Left ventricle myocardium inferior (tissue), 1 donor: ENCODE measurements at regions of chr3 and their contacts with region 1.

Region 1: GRCh38 chr3:152183473-152183872 is 85.3 kb upstream of the MBNL1 start:
- DNase-seq: peak; percentile 39
- H3K4me3 ChIP-seq: no peak overlapping the region
- H3K27ac ChIP-seq: no peak overlapping the region
- H3K4me1 ChIP-seq: peaks cover 2% of the 10 kb centered on the region
- H3K27me3 ChIP-seq: no peaks in the 10 kb centered on the region
- CTCF ChIP-seq: peak; percentile 76

Region 2: GRCh38 chr3:152331018-152331541 is 147.6 kb after region 1 on chr3:
- intact Hi-C with region 1: no loop called
- DNase-seq: no peak
- H3K4me3 ChIP-seq: peak overlapping the region; percentile 5
- H3K27ac ChIP-seq: peak overlapping the region; percentile 83
- H3K4me1 ChIP-seq: peaks cover 92% of the 10 kb centered on the region
- H3K27me3 ChIP-seq: no peaks in the 10 kb centered on the region
- CTCF ChIP-seq: no peak

Region 3: DNA sequence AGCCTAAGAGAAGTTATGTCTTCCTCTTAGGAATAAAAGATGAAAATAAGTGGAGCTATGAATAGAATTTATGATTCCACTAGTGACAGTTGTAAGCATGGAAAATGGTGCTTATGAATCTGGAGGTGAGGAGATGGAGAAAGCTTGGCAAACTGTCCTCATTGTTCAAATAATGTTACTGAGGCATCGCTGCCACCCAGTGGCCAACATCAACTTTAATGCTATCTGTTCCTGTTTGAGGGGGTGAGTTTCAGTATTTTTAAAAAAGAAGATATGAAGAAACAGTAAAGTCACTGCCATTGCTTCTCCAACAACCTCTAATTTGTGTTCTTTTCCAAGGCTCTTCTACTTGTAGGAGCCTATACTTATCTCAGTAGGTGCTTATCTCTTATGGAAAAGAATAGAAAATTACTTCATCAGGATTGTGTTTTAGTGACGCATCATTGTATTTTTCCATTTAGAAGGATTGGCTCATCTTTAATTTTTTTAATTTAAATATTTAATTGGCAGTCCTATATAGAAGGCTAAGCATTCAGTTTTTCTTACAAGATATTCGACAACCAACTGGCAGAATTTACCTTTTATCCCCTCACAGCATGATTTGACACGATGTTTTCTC is 391.1 kb after region 1 on chr3:
- intact Hi-C with region 1: loop called (anchors 10 kb)
- DNase-seq: peak; percentile 45
- H3K4me3 ChIP-seq: no peak overlapping the region
- H3K27ac ChIP-seq: no peak overlapping the region
- H3K4me1 ChIP-seq: peaks cover 13% of the 10 kb centered on the region
- H3K27me3 ChIP-seq: no peaks in the 10 kb centered on the region
- CTCF ChIP-seq: peak; percentile 76